ENCODE measurements at regions of chr1 and their contacts with region 1.

Region 1: DNA sequence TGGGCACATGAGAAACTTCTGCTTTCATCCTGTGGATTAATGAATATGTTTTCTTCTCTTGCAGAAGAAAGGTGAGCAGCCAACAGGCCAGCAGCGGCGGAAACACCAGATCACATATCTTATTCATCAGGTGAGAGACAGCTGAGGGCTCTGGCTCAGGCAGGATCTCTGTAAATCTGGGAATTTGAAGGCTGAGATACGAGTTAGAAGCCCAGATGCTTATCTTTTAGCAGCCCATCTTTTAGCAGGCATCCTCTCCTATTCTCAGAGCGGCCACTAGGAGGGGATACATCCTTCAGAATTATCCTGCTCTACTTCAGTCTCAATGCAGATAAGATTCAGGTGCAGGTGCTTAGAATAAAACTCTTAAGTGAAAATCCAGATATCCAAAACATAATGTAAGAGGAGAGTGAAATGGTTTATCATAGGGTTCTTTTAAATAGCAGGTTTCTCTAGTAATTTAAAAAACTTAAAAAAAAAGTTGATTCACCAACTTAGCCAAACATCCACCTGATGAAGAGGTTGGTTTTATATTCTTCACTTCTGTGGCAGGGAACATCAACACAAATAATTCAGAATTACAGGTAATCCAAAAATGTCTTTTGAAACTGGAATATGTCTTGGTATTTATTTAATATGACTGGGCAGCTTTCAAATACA is 19.3 kb downstream of the SH2D2A start:
- DNase-seq: peak; percentile 68
- H3K4me3 ChIP-seq: no peak overlapping the region; a peak in 1 of 4 replicates
- H3K27ac ChIP-seq: peak overlapping the region in 1 of 2 experiments; percentile 85; a peak in 2 of 4 replicates
- H3K4me1 ChIP-seq: peaks cover 20 to 59% of the 10 kb centered on the region in 2 experiments
- H3K27me3 ChIP-seq: no peaks in the 10 kb centered on the region
- CTCF ChIP-seq: peak; percentile 94
- EP300 ChIP-seq: peak in 1 of 2 experiments; percentile 83; a peak in 2 of 4 replicates
- RAD21 ChIP-seq: peak; percentile 90

Region 2: DNA sequence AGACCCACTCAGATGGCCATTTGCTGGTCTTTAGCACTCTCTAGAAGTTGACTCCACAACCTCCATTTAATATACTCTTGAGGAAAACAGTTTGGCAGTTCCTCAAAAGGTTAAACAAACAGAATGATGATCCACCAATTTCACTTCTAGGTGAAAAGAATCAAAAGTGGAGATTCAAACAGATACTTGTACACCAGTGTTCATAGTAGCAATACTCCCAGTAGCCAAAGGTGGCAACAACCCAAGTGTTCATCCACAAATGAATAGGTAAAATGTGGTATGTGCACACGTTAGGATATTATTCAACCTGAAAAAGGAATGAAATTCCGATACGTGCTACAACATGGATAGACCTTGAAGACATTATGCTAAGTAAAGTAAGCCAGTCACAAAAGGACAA is 23.7 kb before region 1 on chr1:
- CTCF ChIA-PET with region 1: interaction called, 19 read pairs
- POLR2A ChIA-PET with region 1: interaction called, 12 read pairs
- DNase-seq: no peak
- H3K4me3 ChIP-seq: no peak overlapping the region
- H3K27ac ChIP-seq: peak overlapping the region; percentile 29 to 93; a peak in 3 of 4 replicates
- H3K4me1 ChIP-seq: peaks cover 27 to 41% of the 10 kb centered on the region in 2 experiments; a peak in 3 of 4 replicates
- H3K27me3 ChIP-seq: no peaks in the 10 kb centered on the region
- CTCF ChIP-seq: peak; percentile 18; the same call in 1 of the 2 replicates
- EP300 ChIP-seq: no peak
- RAD21 ChIP-seq: no peak

Region 3: DNA sequence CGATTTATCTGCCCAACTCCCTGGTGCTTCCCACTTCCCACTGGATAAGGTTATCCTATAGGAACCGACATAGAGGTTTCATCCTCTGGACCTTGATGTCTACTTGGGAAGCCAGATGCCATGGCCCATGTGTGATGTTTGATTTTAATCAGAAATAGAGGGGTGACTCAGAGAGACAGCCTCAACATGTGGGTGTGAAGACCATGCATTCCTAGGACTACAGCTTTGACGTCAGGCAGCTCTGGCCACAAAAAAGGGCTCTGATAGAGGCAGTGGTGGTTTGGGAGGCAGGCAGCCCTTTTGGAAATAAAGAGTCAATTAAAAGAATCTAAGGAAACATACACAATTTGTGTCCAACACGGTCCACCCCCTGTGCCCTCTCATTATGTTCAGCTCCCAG is 24.5 kb after region 1 on chr1:
- CTCF ChIA-PET with region 1: interaction called, 11 read pairs
- POLR2A ChIA-PET with region 1: interaction called, 4 read pairs
- DNase-seq: no peak
- H3K4me3 ChIP-seq: no peak overlapping the region
- H3K27ac ChIP-seq: no peak overlapping the region
- H3K4me1 ChIP-seq: no peaks in the 10 kb centered on the region
- H3K27me3 ChIP-seq: no peaks in the 10 kb centered on the region
- CTCF ChIP-seq: no peak
- EP300 ChIP-seq: no peak
- RAD21 ChIP-seq: no peak

Region 4: DNA sequence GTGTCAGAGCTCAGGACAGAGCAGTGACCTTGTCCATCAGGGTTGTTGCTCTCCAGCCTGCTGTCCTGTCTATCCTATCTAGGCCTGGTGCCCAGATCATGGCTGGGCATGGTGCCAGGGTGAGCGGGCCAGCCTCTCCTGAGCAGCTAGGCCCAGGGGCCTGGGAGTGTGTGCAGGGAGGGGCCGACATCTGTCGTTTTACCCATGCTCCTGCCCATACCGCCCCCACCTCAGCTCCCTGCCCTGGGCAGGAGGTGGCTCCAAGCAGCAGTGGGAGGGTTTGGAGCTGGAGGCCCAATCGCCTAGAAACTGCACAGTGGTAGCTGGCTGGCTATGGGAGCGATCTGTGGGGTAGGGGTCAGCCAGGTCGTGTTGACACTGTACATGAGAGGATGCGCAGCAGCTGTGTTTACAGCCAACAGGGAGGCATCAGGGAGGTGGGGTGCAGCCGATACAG is 55.1 kb after region 1 on chr1:
- CTCF ChIA-PET with region 1: interaction called, 566 read pairs
- POLR2A ChIA-PET with region 1: interaction called, 97 read pairs
- DNase-seq: peak; percentile 96
- H3K4me3 ChIP-seq: no peak overlapping the region
- H3K27ac ChIP-seq: peak overlapping the region in 1 of 2 experiments; percentile 94; a peak in 2 of 4 replicates
- H3K4me1 ChIP-seq: peaks cover 0 to 45% of the 10 kb centered on the region in 2 experiments; a peak in 3 of 4 replicates
- H3K27me3 ChIP-seq: peaks cover 6% of the 10 kb centered on the region; the same call in 1 of the 2 replicates
- CTCF ChIP-seq: no peak
- EP300 ChIP-seq: peak in 1 of 2 experiments; percentile 88; a peak in 2 of 4 replicates
- RAD21 ChIP-seq: peak; percentile 0; the same call in 1 of the 2 replicates

Region 5: DNA sequence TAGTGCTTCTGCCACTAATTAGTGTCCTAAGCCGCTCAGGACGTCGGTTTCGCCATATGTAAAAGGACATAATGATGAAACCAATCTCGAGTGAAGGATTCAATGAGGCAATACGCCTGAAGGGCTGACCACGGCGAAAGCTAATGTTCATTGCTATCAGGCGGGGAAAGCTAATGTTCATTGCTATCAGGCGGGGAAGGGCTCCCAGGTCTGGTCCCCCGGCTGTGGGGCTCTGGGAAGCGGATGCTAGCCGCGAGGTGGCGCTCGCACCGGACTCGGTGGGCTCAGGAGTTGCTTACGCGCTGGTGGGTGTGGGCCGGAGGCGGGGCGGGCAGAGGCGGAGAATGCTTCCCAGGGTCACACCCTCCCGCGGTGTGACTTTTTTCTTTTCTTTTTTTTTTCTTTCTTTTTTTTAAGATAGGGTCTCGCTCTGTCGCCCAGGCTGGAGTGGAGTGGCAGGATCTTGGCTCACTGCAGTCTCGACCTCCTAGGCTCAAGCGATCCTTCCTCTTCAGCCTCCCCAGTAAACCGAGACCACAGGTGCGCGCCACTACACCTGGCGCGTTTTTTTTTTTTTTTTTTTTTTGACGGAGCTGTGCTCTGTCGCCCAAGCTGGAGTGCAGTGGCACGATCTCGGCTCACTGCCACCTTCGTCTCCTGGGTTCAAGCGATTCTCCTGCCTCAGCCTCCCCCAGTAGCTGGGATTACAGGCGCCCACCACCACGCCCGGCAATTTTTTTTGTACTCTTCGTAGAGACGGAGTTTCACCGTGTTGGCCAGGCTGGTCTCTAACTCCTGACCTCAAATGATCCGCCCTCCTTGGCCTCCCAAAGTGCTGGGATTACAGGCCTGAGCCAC is 95.1 kb after region 1 on chr1:
- CTCF ChIA-PET with region 1: interaction called, 294 read pairs
- POLR2A ChIA-PET with region 1: interaction called, 4 read pairs
- DNase-seq: peak; percentile 94
- H3K4me3 ChIP-seq: no peak overlapping the region; a peak in 1 of 4 replicates
- H3K27ac ChIP-seq: no peak overlapping the region
- H3K4me1 ChIP-seq: peaks cover 23 to 38% of the 10 kb centered on the region in 2 experiments; a peak in 3 of 4 replicates
- H3K27me3 ChIP-seq: no peaks in the 10 kb centered on the region
- CTCF ChIP-seq: peak; percentile 92
- EP300 ChIP-seq: no peak
- RAD21 ChIP-seq: peak; percentile 75

Measured in SK-N-SH (cell line).